Naive thymus-derived CD4-positive, alpha-beta T cell (primary cell): ENCODE measurements at regions of chr6 and their contacts with region 1.

Region 1: GRCh38 chr6:148250975-148251685 is 91.5 kb upstream of the SASH1 start:
- DNase-seq: peak in 4 of 9 donors; percentile 5 to 18 (median 15)
- ATAC-seq: no peak
- H3K4me3 ChIP-seq: no peak overlapping the region
- H3K4me3 Mint-ChIP-seq: no peak overlapping the region
- H3K27ac ChIP-seq: no peak overlapping the region
- H3K27ac Mint-ChIP-seq: no peak overlapping the region
- H3K4me1 ChIP-seq: no peaks in the 10 kb centered on the region
- H3K4me1 Mint-ChIP-seq: no peaks in the 10 kb centered on the region
- H3K27me3 ChIP-seq: no peaks in the 10 kb centered on the region
- H3K27me3 Mint-ChIP-seq: peaks cover 0 to 25% (median 7%) of the 10 kb centered on the region in 5 donors

Region 2: DNA sequence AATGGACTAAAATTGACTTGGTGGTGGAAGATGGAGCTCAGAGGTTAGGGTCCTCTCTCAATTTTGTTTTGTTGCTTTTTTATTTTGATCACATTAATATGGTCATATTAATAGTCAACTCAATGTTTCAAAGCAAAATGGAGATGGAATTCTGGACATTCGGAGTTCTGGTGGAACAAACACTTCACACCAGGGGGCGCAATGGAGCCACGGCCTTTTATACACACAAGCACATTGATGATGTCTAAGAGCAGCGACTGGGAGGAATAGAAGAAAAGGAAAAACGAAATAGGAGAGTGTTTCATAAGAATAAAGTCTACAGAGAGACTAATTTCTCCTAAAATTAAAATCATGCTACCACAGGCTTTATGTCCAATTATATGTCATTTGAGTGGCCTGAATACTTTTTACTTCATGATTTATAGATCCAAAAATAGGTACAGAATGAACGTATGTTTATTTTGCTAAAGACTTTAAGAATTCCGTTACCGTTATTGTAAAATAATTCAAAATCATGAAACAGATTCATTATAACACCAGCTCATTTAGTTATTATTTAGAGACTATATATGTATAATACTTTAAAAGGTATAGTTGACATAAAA is 106.1 kb before region 1 on chr6:
- CTCF ChIA-PET with region 1: interaction called, 4 read pairs
- POLR2A ChIA-PET with region 1: no interaction called
- intact Hi-C with region 1: loop called (anchors 1 kb)
- DNase-seq: peak in 6 of 9 donors; percentile 4 to 52 (median 10)
- ATAC-seq: no peak
- H3K4me3 ChIP-seq: no peak overlapping the region
- H3K4me3 Mint-ChIP-seq: no peak overlapping the region
- H3K27ac ChIP-seq: no peak overlapping the region
- H3K27ac Mint-ChIP-seq: no peak overlapping the region
- H3K4me1 ChIP-seq: no peaks in the 10 kb centered on the region
- H3K4me1 Mint-ChIP-seq: peaks cover 0 to 8% (median 8%) of the 10 kb centered on the region in 7 donors
- H3K27me3 ChIP-seq: no peaks in the 10 kb centered on the region
- H3K27me3 Mint-ChIP-seq: peaks cover 4 to 13% (median 9%) of the 10 kb centered on the region in 5 donors

Region 3: GRCh38 chr6:148177589-148178233 is 73.4 kb before region 1 on chr6:
- CTCF ChIA-PET with region 1: interaction called, 7 read pairs
- POLR2A ChIA-PET with region 1: no interaction called
- intact Hi-C with region 1: loop called in 1 of 2 experiments (anchors 1 kb)
- DNase-seq: peak in 2 of 9 donors; percentile 5 to 25
- ATAC-seq: no peak
- H3K4me3 ChIP-seq: no peak overlapping the region
- H3K4me3 Mint-ChIP-seq: no peak overlapping the region
- H3K27ac ChIP-seq: no peak overlapping the region
- H3K27ac Mint-ChIP-seq: no peak overlapping the region
- H3K4me1 ChIP-seq: no peaks in the 10 kb centered on the region
- H3K4me1 Mint-ChIP-seq: no peaks in the 10 kb centered on the region
- H3K27me3 ChIP-seq: no peaks in the 10 kb centered on the region
- H3K27me3 Mint-ChIP-seq: peaks cover 15 to 36% (median 22%) of the 10 kb centered on the region in 5 donors

Region 4: DNA sequence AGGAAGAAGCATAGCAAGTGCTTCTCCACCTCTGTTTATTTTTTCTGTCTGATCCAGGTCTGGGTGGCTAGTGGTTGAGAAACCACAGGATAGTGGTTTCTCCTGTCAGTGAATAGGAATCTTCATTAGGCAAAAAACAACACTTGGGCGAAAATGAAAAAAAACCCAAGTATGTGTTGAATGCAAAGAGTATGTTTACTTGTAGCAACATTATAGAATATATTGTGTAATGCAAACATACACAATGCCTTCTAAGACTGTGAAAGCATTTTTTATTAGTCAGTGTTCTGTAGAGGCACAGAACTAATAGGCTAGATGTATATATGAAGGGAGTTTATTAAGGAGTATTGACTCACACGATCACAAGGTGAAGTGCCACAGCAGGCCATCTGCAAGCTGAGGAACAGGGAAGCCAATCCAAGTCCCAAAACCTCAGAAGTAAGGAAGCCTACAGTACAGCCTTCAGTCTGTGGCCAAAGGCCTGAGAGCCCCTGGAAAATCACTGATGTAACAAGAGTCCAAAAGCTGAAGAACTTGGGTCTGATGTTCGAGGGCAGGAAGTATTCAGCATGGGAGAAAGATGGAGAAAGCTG is 606.8 kb after region 1 on chr6:
- CTCF ChIA-PET with region 1: no interaction called
- POLR2A ChIA-PET with region 1: no interaction called
- intact Hi-C with region 1: no loop called
- DNase-seq: no peak
- ATAC-seq: no peak
- H3K4me3 ChIP-seq: no peak overlapping the region
- H3K4me3 Mint-ChIP-seq: no peak overlapping the region
- H3K27ac ChIP-seq: no peak overlapping the region
- H3K27ac Mint-ChIP-seq: no peak overlapping the region
- H3K4me1 ChIP-seq: no peaks in the 10 kb centered on the region
- H3K4me1 Mint-ChIP-seq: peaks cover 0 to 4% (median 0%) of the 10 kb centered on the region in 7 donors
- H3K27me3 ChIP-seq: no peaks in the 10 kb centered on the region
- H3K27me3 Mint-ChIP-seq: peaks cover 11 to 23% (median 16%) of the 10 kb centered on the region in 5 donors